K562 (cell line): ENCODE measurements at regions of chr5 and their contacts with region 1.

Region 1: GRCh38 chr5:40834849-40835787 is at the start of gene RPL37:
- DNase-seq: peak; percentile 92 to 99 (median 94)
- ATAC-seq: peak; percentile 92
- H3K4me3 ChIP-seq: peak within 1 kb of the TSS; percentile 78
- H3K27ac ChIP-seq: peak within 1 kb of the TSS; percentile 96
- H3K4me1 ChIP-seq: peaks cover 5 to 28% of the 10 kb centered on the region in 2 experiments; a peak in 4 of 5 replicates
- H3K27me3 ChIP-seq: no peaks in the 10 kb centered on the region
- CTCF ChIP-seq: no peak
- EP300 ChIP-seq: peak; percentile 70
- POLR2A ChIP-seq: peak; percentile 100
- RAD21 ChIP-seq: peak; percentile 13 to 34; a peak in 3 of 4 replicates
- polyA plus RNA-seq, gene RPL37: 2,628 to 3,207 TPM

Region 2: DNA sequence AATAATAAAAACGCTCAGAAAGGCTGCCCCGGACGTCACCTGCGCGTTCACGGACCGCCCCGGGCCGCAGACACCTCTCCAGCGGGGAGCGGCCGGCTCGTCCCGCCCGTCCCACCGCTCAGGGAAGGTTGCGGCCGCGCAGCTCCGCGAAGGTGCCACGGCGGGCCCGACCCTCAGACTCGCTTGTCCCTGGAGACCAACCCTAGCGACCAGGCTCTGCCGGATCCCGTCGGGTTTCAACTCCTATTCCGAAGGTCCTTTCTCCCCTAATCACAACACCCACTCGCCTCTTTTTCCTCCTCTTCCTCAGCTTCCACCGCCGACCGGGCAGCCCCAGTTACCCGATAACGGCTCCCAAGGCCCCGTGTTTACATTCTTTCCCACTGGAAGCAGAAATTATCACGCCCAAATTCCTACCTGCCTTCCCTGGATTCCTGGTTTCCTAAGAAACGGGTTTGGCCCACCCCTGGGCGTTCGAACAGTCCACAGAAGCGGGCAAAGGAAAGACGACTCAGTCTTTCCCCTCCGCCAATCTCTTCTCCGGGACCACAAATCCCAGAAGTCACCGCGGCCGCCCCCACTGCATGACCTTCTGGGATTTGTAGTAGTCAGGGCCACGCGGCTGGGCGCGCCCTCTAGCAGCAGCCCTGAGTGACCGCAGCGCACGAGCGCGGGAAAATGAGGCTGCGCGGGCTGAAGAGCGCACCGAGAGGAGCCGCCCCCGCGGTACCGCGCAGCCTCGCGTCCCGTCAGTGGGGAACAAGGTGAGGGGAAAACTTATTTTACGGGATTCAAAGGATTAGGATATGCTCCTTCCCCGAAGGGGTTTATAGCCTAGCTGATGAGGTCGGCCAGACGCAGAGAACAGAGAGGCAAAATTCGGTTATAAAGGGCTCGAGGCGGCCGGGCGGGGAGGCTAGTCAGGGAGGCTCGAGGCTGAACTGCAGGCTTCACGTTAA is 79.4 kb before region 1 on chr5 and contains the start of gene TTC33:
- CTCF ChIA-PET with region 1: no interaction called
- POLR2A ChIA-PET with region 1: interaction called, 5 read pairs
- in situ Hi-C with region 1: no loop called
- intact Hi-C with region 1: loop called (anchors 1 kb)
- DNase-seq: peak; percentile 92 to 99 (median 96)
- ATAC-seq: peak; percentile 94
- H3K4me3 ChIP-seq: peak within 1 kb of the TSS; percentile 68
- H3K27ac ChIP-seq: peak within 1 kb of the TSS; percentile 69
- H3K4me1 ChIP-seq: peaks cover 9 to 12% of the 10 kb centered on the region in 2 experiments; a peak in 3 of 5 replicates
- H3K27me3 ChIP-seq: no peaks in the 10 kb centered on the region
- CTCF ChIP-seq: peak; percentile 91 to 95 (median 92)
- EP300 ChIP-seq: peak; percentile 30; the same call in 1 of the 2 replicates
- POLR2A ChIP-seq: peak; percentile 72
- RAD21 ChIP-seq: peak; percentile 45 to 55
- polyA plus RNA-seq, gene TTC33: 21.1 to 24.9 TPM

Region 3: GRCh38 chr5:40798012-40798855 is 36.9 kb before region 1 on chr5 and contains the start of gene PRKAA1:
- CTCF ChIA-PET with region 1: no interaction called
- POLR2A ChIA-PET with region 1: interaction called, 121 read pairs
- in situ Hi-C with region 1: no loop called
- intact Hi-C with region 1: loop called (anchors 1 kb)
- DNase-seq: peak; percentile 94 to 96 (median 95)
- ATAC-seq: peak; percentile 85
- H3K4me3 ChIP-seq: peak within 1 kb of the TSS; percentile 94
- H3K27ac ChIP-seq: peak within 1 kb of the TSS; percentile 92
- H3K4me1 ChIP-seq: peaks cover 26 to 35% of the 10 kb centered on the region in 2 experiments
- H3K27me3 ChIP-seq: no peaks in the 10 kb centered on the region
- CTCF ChIP-seq: peak; percentile 53 to 85 (median 72); a peak in 5 of 6 replicates
- EP300 ChIP-seq: no peak; the same call in 1 of the 2 replicates
- POLR2A ChIP-seq: peak; percentile 93
- RAD21 ChIP-seq: peak in 1 of 2 experiments; percentile 48; a peak in 2 of 4 replicates
- polyA plus RNA-seq, gene PRKAA1: 24.5 to 37.3 TPM

Region 4: GRCh38 chr5:40813698-40814281 is 21.3 kb before region 1 on chr5:
- CTCF ChIA-PET with region 1: no interaction called
- POLR2A ChIA-PET with region 1: interaction called, 32 read pairs
- in situ Hi-C with region 1: no loop called
- intact Hi-C with region 1: no loop called
- DNase-seq: no peak
- ATAC-seq: peak; percentile 28; the same call in 2 of the 3 replicates
- H3K4me3 ChIP-seq: no peak overlapping the region
- H3K27ac ChIP-seq: no peak overlapping the region
- H3K4me1 ChIP-seq: peaks cover 4 to 11% of the 10 kb centered on the region in 2 experiments
- H3K27me3 ChIP-seq: no peaks in the 10 kb centered on the region
- CTCF ChIP-seq: no peak
- EP300 ChIP-seq: no peak
- POLR2A ChIP-seq: no peak
- RAD21 ChIP-seq: no peak

Region 5: GRCh38 chr5:40823459-40823858 is 11.7 kb before region 1 on chr5:
- CTCF ChIA-PET with region 1: no interaction called
- POLR2A ChIA-PET with region 1: interaction called, 125 read pairs
- in situ Hi-C with region 1: no loop called
- intact Hi-C with region 1: no loop called
- DNase-seq: no peak
- ATAC-seq: peak; percentile 5; the same call in 2 of the 3 replicates
- H3K4me3 ChIP-seq: no peak overlapping the region
- H3K27ac ChIP-seq: peak overlapping the region; percentile 19; the same call in 1 of the 3 replicates
- H3K4me1 ChIP-seq: peaks cover 0 to 6% of the 10 kb centered on the region in 2 experiments; a peak in 3 of 5 replicates
- H3K27me3 ChIP-seq: no peaks in the 10 kb centered on the region
- CTCF ChIP-seq: no peak
- EP300 ChIP-seq: no peak
- POLR2A ChIP-seq: no peak
- RAD21 ChIP-seq: no peak

Region 6: GRCh38 chr5:41067714-41068568 is 232.8 kb after region 1 on chr5:
- CTCF ChIA-PET with region 1: no interaction called
- POLR2A ChIA-PET with region 1: no interaction called
- in situ Hi-C with region 1: no loop called
- intact Hi-C with region 1: no loop called
- DNase-seq: peak in 1 of 4 experiments; percentile 7
- ATAC-seq: peak; percentile 53
- H3K4me3 ChIP-seq: no peak overlapping the region
- H3K27ac ChIP-seq: no peak overlapping the region
- H3K4me1 ChIP-seq: no peaks in the 10 kb centered on the region
- H3K27me3 ChIP-seq: no peaks in the 10 kb centered on the region
- CTCF ChIP-seq: no peak
- EP300 ChIP-seq: no peak
- POLR2A ChIP-seq: no peak
- RAD21 ChIP-seq: no peak